ENCODE measurements at regions of chr12 and their contacts with region 1.

Region 1: DNA sequence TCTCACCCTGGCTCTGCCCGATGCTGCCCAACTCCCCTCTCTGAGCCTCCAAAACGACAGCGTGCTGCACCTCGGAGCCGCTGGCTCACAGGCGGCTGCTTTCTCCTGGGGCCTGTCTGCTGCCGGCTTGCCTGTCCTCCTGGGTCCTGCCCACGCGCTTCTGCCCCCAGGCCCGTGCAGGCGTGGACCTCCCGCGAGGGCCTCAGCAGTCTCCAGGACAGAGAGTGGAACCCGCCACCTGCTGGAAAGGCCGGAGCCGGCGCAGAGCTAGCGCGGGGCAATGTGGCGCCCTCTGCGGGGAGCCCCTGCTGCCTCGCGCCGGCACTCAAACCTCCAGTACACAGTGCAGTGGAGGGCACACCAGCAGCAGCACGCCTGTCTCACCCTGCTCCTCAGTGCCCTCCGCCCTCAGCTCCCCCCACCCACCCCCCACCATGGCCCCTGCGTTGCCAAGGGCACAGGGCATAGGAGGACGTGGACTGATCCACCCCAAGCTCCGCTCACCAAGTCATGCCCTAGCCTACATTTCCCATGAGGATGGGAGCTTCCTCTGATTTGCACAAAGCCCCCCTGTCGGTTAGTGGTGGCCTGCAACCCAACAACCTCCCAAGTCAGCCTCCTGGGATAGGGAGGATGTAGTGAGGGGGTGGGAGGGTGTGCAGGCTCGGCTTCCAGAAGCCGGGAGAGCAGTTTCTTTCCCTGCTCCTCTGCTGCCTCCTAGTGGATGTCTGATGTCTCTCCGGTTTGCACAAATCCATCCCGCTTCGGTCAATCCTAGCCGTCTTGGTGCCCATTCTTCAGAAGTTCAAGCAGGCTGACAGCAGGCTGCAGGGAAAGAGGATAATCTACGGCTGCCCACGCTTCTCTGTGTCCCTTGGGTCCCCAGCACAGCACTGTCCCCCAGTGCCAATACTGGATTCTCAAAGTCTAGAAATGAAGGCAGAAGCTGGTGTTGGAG is 25.2 kb downstream of the KRT8 start:
- DNase-seq: peak; percentile 84
- ATAC-seq: peak; percentile 97
- H3K4me3 Mint-ChIP-seq: peak overlapping the region; percentile 49
- H3K27ac Mint-ChIP-seq: no peak overlapping the region
- H3K4me1 Mint-ChIP-seq: peaks cover 13% of the 10 kb centered on the region
- H3K27me3 Mint-ChIP-seq: peaks cover 11% of the 10 kb centered on the region

Region 2: GRCh38 chr12:52372216-52373154 is 507.2 kb before region 1 on chr12:
- CTCF ChIA-PET with region 1: interaction called, 44 read pairs
- POLR2A ChIA-PET with region 1: no interaction called
- DNase-seq: peak; percentile 76
- ATAC-seq: peak; percentile 72
- H3K4me3 Mint-ChIP-seq: no peak overlapping the region
- H3K27ac Mint-ChIP-seq: no peak overlapping the region
- H3K4me1 Mint-ChIP-seq: no peaks in the 10 kb centered on the region
- H3K27me3 Mint-ChIP-seq: peaks cover 35% of the 10 kb centered on the region

Region 3: DNA sequence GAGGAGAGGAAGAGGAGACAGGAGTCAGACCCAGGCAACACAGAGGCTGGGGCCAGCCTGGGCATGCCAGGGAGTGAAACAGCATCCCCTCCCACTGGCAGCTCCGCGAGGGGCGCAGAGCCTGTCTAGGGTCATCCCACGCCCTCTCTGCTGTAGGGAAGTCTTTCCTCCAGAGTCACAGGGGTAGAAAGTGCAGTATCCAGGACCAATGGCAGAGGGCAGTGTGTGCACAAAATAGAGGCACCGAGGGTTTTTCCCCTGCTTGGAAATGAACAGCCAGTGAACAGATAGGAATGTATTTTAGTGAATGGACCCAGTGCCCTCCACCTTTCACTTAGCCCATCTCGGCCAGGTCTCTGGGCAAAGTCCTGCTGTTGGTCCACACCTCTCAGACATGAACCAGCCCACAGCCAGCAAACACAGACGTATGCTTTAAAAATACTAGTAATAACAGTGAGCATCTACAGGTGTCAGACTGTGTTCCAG is 296.7 kb before region 1 on chr12:
- CTCF ChIA-PET with region 1: interaction called, 736 read pairs
- POLR2A ChIA-PET with region 1: interaction called, 3 read pairs
- DNase-seq: peak; percentile 76
- ATAC-seq: peak; percentile 65
- H3K4me3 Mint-ChIP-seq: no peak overlapping the region
- H3K27ac Mint-ChIP-seq: no peak overlapping the region
- H3K4me1 Mint-ChIP-seq: peaks cover 34% of the 10 kb centered on the region
- H3K27me3 Mint-ChIP-seq: peaks cover 2% of the 10 kb centered on the region

Region 4: GRCh38 chr12:52895061-52895887 is 15.6 kb after region 1 on chr12:
- CTCF ChIA-PET with region 1: interaction called, 60 read pairs
- POLR2A ChIA-PET with region 1: no interaction called
- DNase-seq: no peak
- ATAC-seq: no peak
- H3K4me3 Mint-ChIP-seq: no peak overlapping the region
- H3K27ac Mint-ChIP-seq: no peak overlapping the region
- H3K4me1 Mint-ChIP-seq: no peaks in the 10 kb centered on the region
- H3K27me3 Mint-ChIP-seq: peaks cover 2% of the 10 kb centered on the region

Region 5: DNA sequence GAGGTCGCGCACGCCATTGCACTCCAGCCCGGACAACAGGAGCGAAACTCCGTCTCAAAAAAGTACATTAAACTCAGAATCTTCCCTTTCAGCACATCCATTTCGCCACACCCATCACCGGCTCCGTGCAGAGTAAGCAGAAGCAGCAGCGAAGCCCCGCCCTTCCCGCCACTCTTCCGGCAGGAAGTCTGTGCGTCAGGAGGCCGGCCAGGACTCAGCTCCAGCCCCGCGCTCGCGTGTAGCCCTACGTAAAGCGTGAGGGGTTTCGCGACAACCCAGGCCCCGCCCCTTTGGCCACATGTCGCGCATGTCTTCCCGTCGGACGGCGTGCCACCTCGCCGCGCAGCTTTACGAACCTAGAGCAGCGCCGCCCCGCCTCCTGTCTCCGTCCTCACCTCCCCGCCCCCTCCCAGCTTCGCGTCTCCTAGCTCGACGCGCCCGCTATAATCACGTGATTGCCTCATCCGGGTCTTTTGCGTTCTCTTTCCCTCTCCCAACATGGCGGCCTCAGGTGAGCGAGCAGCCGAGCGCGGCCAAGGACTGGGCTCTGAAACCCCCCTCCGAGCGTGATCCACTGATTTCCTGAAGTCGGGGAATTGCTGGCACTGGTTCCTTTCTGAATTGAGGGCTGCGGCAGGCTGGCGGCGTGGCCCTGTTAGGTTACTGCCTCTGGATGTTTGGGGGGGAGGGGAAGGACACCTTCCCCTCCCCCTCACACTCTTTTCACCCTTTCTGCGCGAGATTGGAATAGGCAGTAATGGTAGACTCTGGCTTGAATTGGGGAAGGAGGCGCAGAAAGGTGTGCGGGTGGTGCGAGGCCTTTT is 126.5 kb after region 1 on chr12 and contains the start of gene EIF4B:
- CTCF ChIA-PET with region 1: interaction called, 12 read pairs
- POLR2A ChIA-PET with region 1: no interaction called
- DNase-seq: peak; percentile 100
- ATAC-seq: peak; percentile 97
- H3K4me3 Mint-ChIP-seq: peak within 1 kb of the TSS; percentile 97
- H3K27ac Mint-ChIP-seq: peak within 1 kb of the TSS; percentile 98
- H3K4me1 Mint-ChIP-seq: peaks cover 47% of the 10 kb centered on the region
- H3K27me3 Mint-ChIP-seq: peaks cover 2% of the 10 kb centered on the region
- total RNA-seq, gene EIF4B: 352 to 353 TPM

Measured in activated CD8-positive, alpha-beta T cell treated with anti-CD3 and anti-CD28 coated beads, Interleukin-2, amount 10 ng/mL, durations not matched to agents 7 days and 5 days (primary cell).